ENCODE measurements at regions of chr17 and their contacts with region 1.

Region 1: DNA sequence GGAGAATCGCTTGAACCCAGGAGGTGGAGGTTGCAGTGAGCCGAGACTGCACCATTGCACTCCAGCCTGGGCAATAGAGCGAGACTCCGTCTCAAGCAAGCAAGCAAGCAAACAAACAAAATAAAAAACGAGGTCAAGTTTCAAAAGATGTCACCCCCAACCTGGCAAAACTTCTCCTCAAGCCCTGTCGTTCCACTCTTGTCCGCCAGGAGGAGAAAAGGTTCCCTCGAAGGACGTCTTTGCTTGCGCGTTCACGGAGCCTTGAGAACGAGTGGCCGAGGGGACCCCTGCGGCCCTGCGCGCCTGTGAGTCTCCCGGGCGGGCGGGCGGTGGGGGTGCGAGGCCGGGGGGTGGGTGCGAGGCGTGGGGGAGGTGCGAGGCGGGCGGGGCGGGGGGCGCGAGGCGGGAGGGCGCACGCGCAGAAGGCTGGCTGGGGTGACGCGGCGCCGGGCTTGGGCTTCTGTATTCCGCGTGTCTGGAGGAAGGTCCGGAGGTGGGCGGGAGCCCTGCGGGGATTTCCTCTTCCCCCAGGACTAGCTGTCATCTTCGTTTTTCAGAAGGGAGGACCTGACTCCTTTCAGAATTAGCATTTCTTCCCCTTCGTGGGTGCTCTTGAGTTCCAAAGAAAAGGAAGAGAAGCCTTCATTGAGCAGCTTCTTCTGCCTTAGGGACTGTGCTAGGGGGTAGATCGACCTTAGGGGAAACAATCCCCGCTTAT is 3.7 kb downstream of the SLC52A1 start:
- DNase-seq: peak; percentile 47 to 94
- H3K4me3 ChIP-seq: peak overlapping the region; percentile 15 to 55 (median 28); a peak in 6 of 8 replicates
- H3K27ac ChIP-seq: no peak overlapping the region
- H3K4me1 ChIP-seq: no peaks in the 10 kb centered on the region; a peak in 1 of 7 replicates
- H3K27me3 ChIP-seq: peaks cover 0 to 14% (median 1%) of the 10 kb centered on the region in 4 experiments; a peak in 5 of 7 replicates
- CTCF ChIP-seq: peak; percentile 66 to 82 (median 72)
- EP300 ChIP-seq: no peak
- POLR2A ChIP-seq: no peak
- RAD21 ChIP-seq: peak; percentile 45 to 60

Region 2: GRCh38 chr17:5019475-5019956 is 12.0 kb before region 1 on chr17:
- CTCF ChIA-PET with region 1: interaction called, 21 read pairs
- POLR2A ChIA-PET with region 1: interaction called, 7 read pairs
- DNase-seq: no peak
- H3K4me3 ChIP-seq: no peak overlapping the region
- H3K27ac ChIP-seq: no peak overlapping the region
- H3K4me1 ChIP-seq: no peaks in the 10 kb centered on the region
- H3K27me3 ChIP-seq: no peaks in the 10 kb centered on the region
- CTCF ChIP-seq: peak; percentile 39 to 50 (median 50)
- EP300 ChIP-seq: no peak
- POLR2A ChIP-seq: no peak
- RAD21 ChIP-seq: peak; percentile 52 to 67

Region 3: DNA sequence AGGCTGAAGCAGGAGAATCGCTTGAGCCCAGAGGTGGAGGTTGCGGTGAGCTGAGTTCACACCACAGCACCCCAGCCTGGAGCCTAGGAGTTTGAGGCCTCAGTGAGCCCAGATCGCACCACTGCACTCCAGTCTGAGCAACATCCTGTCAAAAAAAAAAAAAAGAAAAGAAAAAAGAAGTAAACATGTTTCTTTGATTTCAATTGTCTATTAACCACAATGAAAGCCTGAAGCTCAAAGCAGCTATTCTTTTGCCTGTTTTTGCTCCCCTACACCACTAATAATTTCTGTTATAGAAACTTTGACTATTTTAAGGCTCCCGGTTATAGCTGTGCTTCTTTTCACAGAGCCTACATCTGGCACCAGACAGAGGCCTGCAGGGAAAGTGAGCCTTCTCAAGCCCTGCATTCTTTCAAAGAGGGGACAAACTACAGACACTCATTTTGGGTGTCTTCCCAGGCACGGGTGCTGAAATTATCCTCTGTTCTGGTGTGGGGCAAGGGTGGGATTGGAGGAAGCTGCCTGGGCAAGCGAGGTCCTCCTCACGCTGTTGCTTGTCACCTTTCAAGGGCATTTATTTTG is 17.9 kb after region 1 on chr17:
- CTCF ChIA-PET with region 1: interaction called, 16 read pairs
- POLR2A ChIA-PET with region 1: interaction called, 4 read pairs
- DNase-seq: no peak
- H3K4me3 ChIP-seq: no peak overlapping the region
- H3K27ac ChIP-seq: no peak overlapping the region
- H3K4me1 ChIP-seq: no peaks in the 10 kb centered on the region
- H3K27me3 ChIP-seq: no peaks in the 10 kb centered on the region
- CTCF ChIP-seq: no peak
- EP300 ChIP-seq: no peak
- POLR2A ChIP-seq: no peak
- RAD21 ChIP-seq: no peak

Region 4: GRCh38 chr17:5055543-5055942 is 24.0 kb after region 1 on chr17:
- CTCF ChIA-PET with region 1: interaction called, 102 read pairs
- POLR2A ChIA-PET with region 1: interaction called, 3 read pairs
- DNase-seq: no peak
- H3K4me3 ChIP-seq: no peak overlapping the region
- H3K27ac ChIP-seq: no peak overlapping the region
- H3K4me1 ChIP-seq: no peaks in the 10 kb centered on the region
- H3K27me3 ChIP-seq: no peaks in the 10 kb centered on the region
- CTCF ChIP-seq: peak; percentile 41 to 58 (median 50); a peak in 3 of 4 replicates
- EP300 ChIP-seq: no peak
- POLR2A ChIP-seq: no peak
- RAD21 ChIP-seq: no peak

Region 5: GRCh38 chr17:5080591-5080990 is 49.1 kb after region 1 on chr17:
- CTCF ChIA-PET with region 1: no interaction called
- POLR2A ChIA-PET with region 1: no interaction called
- DNase-seq: no peak
- H3K4me3 ChIP-seq: no peak overlapping the region
- H3K27ac ChIP-seq: no peak overlapping the region
- H3K4me1 ChIP-seq: no peaks in the 10 kb centered on the region; a peak in 1 of 7 replicates
- H3K27me3 ChIP-seq: peaks cover 0 to 13% (median 8%) of the 10 kb centered on the region in 4 experiments; a peak in 4 of 7 replicates
- CTCF ChIP-seq: no peak
- EP300 ChIP-seq: no peak
- POLR2A ChIP-seq: no peak
- RAD21 ChIP-seq: no peak

Region 6: GRCh38 chr17:5260554-5260953 is 229.0 kb after region 1 on chr17:
- CTCF ChIA-PET with region 1: no interaction called
- POLR2A ChIA-PET with region 1: no interaction called
- DNase-seq: no peak
- H3K4me3 ChIP-seq: no peak overlapping the region
- H3K27ac ChIP-seq: no peak overlapping the region
- H3K4me1 ChIP-seq: no peaks in the 10 kb centered on the region
- H3K27me3 ChIP-seq: no peaks in the 10 kb centered on the region
- CTCF ChIP-seq: no peak
- EP300 ChIP-seq: no peak
- POLR2A ChIP-seq: no peak
- RAD21 ChIP-seq: no peak